ENCODE measurements at regions of chr1 and their contacts with region 1.

Region 1: GRCh38 chr1:110766025-110766647 is 91.4 kb upstream of the KCNA3 start:
- DNase-seq: peak; percentile 67
- ATAC-seq: peak; percentile 85
- H3K4me3 Mint-ChIP-seq: peak overlapping the region; percentile 33
- H3K27ac Mint-ChIP-seq: peak overlapping the region; percentile 44
- H3K4me1 Mint-ChIP-seq: peaks cover 14% of the 10 kb centered on the region
- H3K27me3 Mint-ChIP-seq: peaks cover 30% of the 10 kb centered on the region

Region 2: GRCh38 chr1:110292031-110292741 is 473.9 kb before region 1 on chr1:
- CTCF ChIA-PET with region 1: no interaction called
- DNase-seq: no peak
- ATAC-seq: no peak
- H3K4me3 Mint-ChIP-seq: no peak overlapping the region
- H3K27ac Mint-ChIP-seq: no peak overlapping the region
- H3K4me1 Mint-ChIP-seq: no peaks in the 10 kb centered on the region
- H3K27me3 Mint-ChIP-seq: peaks cover 4% of the 10 kb centered on the region

Region 3: GRCh38 chr1:110554871-110555801 is 211.0 kb before region 1 on chr1:
- CTCF ChIA-PET with region 1: interaction called, 18 read pairs
- DNase-seq: peak; percentile 64
- ATAC-seq: peak; percentile 90
- H3K4me3 Mint-ChIP-seq: no peak overlapping the region
- H3K27ac Mint-ChIP-seq: no peak overlapping the region
- H3K4me1 Mint-ChIP-seq: peaks cover 8% of the 10 kb centered on the region
- H3K27me3 Mint-ChIP-seq: peaks cover 54% of the 10 kb centered on the region

Region 4: DNA sequence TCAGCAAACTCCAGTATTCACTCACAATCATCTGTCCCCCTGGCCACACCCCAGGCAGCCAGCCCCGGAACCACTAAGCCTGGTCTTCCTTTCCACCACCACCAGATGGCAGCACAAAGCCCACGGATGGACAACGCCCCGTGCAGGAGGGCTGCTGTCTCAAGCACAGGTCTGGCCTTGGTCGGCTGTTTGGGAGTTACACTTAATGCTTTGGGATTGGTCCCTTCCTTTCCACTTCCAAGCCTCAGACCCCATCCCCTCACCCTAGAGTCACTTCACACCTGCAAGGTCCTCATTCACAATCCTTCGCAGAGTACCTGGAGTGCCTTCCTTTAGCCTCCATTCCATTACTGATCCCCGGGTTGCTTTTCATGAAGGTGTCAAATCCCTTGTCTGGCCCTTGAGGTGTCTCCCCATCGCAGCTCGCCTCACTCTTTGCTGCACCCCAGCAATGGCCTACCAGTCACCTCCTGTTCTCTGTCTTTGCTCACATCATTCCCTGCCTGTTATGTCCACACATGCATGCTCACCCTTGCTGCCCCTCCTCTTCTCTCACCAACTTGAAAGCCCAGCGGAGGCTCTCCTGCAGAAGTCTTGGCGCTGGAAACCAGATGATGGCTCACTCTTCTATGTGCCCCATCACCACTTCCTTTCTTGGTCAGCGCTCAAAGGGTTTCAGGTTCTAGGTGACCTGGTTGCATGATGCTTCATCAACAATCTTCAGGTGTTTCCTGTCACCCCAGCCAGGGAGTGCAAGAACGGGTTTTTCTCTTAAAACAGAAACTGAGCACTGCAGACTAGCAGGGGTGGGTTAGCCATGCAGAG is 135.1 kb before region 1 on chr1:
- CTCF ChIA-PET with region 1: interaction called, 31 read pairs
- DNase-seq: peak; percentile 95
- ATAC-seq: peak; percentile 84
- H3K4me3 Mint-ChIP-seq: no peak overlapping the region
- H3K27ac Mint-ChIP-seq: no peak overlapping the region
- H3K4me1 Mint-ChIP-seq: peaks cover 33% of the 10 kb centered on the region
- H3K27me3 Mint-ChIP-seq: no peaks in the 10 kb centered on the region

Region 5: GRCh38 chr1:110668549-110668948 is 97.6 kb before region 1 on chr1:
- CTCF ChIA-PET with region 1: interaction called, 29 read pairs
- DNase-seq: no peak
- ATAC-seq: peak; percentile 40
- H3K4me3 Mint-ChIP-seq: peak overlapping the region; percentile 77
- H3K27ac Mint-ChIP-seq: peak overlapping the region; percentile 83
- H3K4me1 Mint-ChIP-seq: peaks cover 16% of the 10 kb centered on the region
- H3K27me3 Mint-ChIP-seq: no peaks in the 10 kb centered on the region

Region 6: GRCh38 chr1:110749960-110750359 is 16.2 kb before region 1 on chr1:
- CTCF ChIA-PET with region 1: interaction called, 14 read pairs
- DNase-seq: no peak
- ATAC-seq: no peak
- H3K4me3 Mint-ChIP-seq: no peak overlapping the region
- H3K27ac Mint-ChIP-seq: no peak overlapping the region
- H3K4me1 Mint-ChIP-seq: no peaks in the 10 kb centered on the region
- H3K27me3 Mint-ChIP-seq: peaks cover 38% of the 10 kb centered on the region

Region 7: GRCh38 chr1:110857964-110858948 is 92.1 kb after region 1 on chr1:
- CTCF ChIA-PET with region 1: no interaction called
- DNase-seq: no peak
- ATAC-seq: no peak
- H3K4me3 Mint-ChIP-seq: no peak overlapping the region
- H3K27ac Mint-ChIP-seq: no peak overlapping the region
- H3K4me1 Mint-ChIP-seq: peaks cover 5% of the 10 kb centered on the region
- H3K27me3 Mint-ChIP-seq: peaks cover 5% of the 10 kb centered on the region